Psoas muscle (tissue), 8 donors: ENCODE measurements at regions of chr7 and their contacts with region 1.

Region 1: GRCh38 chr7:36280840-36281812 is 108.5 kb upstream of the ANLN start:
- DNase-seq: peak; percentile 72 to 85
- ATAC-seq: peak; percentile 80 to 88 (median 84)
- H3K4me3 ChIP-seq: peak overlapping the region; percentile 27
- H3K27ac ChIP-seq: peak overlapping the region; percentile 77
- H3K4me1 ChIP-seq: peaks cover 93% of the 10 kb centered on the region
- H3K27me3 ChIP-seq: no peaks in the 10 kb centered on the region
- CTCF ChIP-seq: no peak

Region 2: DNA sequence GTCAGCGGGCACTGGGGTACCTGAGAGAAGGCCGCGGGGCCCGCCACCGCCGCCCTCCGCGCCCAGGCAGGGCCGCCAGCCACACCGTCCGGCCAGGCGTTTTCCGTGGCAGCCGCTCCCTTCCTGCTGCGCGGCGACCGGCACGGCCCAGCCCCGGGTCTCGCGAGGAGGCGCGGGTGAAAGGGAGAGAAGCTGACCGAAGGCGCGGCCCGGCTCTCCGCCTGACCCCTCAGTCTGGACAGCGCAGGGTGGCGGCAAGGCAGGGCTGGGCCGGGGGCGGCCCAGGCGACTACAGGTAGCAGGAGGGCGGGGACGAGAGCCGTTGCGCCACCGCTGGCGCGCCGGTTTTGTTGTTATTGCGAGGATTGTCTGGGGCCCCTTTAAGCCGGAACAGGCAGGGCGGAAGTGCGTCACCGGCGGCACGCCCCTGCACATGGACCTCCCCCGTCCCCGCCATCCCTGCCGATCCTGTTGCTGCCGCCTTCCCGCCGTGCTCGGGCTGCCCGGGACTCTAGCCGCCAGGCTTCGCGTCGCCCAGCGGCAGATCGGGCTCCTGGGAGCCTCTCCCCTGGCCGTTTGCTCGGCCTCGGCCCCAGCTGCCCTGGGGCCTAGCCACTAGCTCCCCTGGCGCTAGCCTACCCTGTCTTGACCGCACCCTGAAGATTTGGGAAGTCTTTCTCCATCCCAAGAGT is 586.2 kb before region 1 on chr7 and contains the start of gene HERPUD2:
- intact Hi-C with region 1: no loop called
- DNase-seq: peak; percentile 92 to 96
- ATAC-seq: peak; percentile 96 to 97 (median 97)
- H3K4me3 ChIP-seq: peak within 1 kb of the TSS; percentile 96
- H3K27ac ChIP-seq: peak within 1 kb of the TSS; percentile 96
- H3K4me1 ChIP-seq: peaks cover 32% of the 10 kb centered on the region
- H3K27me3 ChIP-seq: no peaks in the 10 kb centered on the region
- CTCF ChIP-seq: no peak
- total RNA-seq, gene HERPUD2: 12.5 to 21.5 (median 16.4) TPM

Region 3: GRCh38 chr7:36155811-36156361 is 125.2 kb before region 1 on chr7:
- intact Hi-C with region 1: loop called (anchors 5 kb)
- DNase-seq: peak; percentile 56 to 89
- ATAC-seq: peak in 2 of 4 donors; percentile 14 to 33
- H3K4me3 ChIP-seq: peak overlapping the region; percentile 93
- H3K27ac ChIP-seq: peak overlapping the region; percentile 95
- H3K4me1 ChIP-seq: peaks cover 70% of the 10 kb centered on the region
- H3K27me3 ChIP-seq: no peaks in the 10 kb centered on the region
- CTCF ChIP-seq: no peak

Region 4: DNA sequence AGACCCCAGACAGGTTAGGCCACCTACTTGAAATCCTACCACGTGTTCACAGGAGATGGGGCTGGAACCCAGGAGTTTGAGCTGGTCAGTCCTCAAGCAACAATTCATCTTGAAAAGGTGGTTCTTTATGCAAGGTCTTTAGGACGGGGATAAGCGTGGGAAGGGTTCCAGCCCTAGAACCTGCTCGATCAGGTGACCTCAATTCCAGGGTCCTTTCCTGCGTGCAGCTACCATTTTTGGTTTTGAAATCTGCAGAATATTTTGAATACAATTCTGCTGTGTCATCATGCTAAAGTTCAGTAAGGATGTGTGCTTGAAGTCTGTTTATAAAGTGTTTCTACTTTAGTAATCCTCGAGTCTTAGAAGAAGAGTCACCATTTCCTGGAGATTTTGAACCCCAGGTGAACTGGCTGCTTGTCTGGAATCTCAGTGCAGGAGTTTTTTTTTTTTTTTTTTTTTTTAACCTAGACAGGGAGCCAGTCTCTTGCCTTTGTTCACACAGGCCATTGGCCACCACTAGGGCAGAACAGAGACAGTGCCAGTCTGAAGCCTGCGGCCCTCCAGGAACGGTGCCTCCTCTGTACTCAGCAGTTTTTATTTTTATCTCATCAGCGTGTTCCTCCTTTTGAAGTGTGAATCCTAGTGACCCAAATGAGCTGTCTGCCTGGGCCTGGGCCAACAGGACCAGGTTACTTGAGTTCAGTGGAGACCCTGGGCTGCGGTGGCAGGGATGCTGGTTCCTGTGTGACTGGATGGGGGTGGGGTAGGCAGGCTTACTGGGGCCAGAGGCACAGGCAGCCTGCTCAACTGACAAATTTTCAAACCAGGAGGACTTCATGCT is 73.5 kb before region 1 on chr7:
- intact Hi-C with region 1: loop called (anchors 5 kb)
- DNase-seq: peak; percentile 79 to 90
- ATAC-seq: peak; percentile 79 to 82 (median 80)
- H3K4me3 ChIP-seq: no peak overlapping the region
- H3K27ac ChIP-seq: peak overlapping the region; percentile 79
- H3K4me1 ChIP-seq: peaks cover 89% of the 10 kb centered on the region
- H3K27me3 ChIP-seq: no peaks in the 10 kb centered on the region
- CTCF ChIP-seq: peak; percentile 30

Region 5: GRCh38 chr7:36214608-36215456 is 66.3 kb before region 1 on chr7:
- intact Hi-C with region 1: loop called in 1 of 2 experiments (anchors 5 kb)
- DNase-seq: peak; percentile 39 to 40
- ATAC-seq: peak; percentile 53 to 68 (median 60)
- H3K4me3 ChIP-seq: no peak overlapping the region
- H3K27ac ChIP-seq: peak overlapping the region; percentile 69
- H3K4me1 ChIP-seq: peaks cover 53% of the 10 kb centered on the region
- H3K27me3 ChIP-seq: no peaks in the 10 kb centered on the region
- CTCF ChIP-seq: no peak

Region 6: GRCh38 chr7:36244429-36244828 is 36.7 kb before region 1 on chr7:
- intact Hi-C with region 1: loop called in 1 of 2 experiments (anchors 5 kb)
- DNase-seq: no peak
- ATAC-seq: no peak
- H3K4me3 ChIP-seq: no peak overlapping the region
- H3K27ac ChIP-seq: peak overlapping the region; percentile 2
- H3K4me1 ChIP-seq: peaks cover 25% of the 10 kb centered on the region
- H3K27me3 ChIP-seq: no peaks in the 10 kb centered on the region
- CTCF ChIP-seq: no peak